Posterior cingulate gyrus (tissue), 11 donors: ENCODE measurements at regions of chr2 and their contacts with region 1.

Region 1: GRCh38 chr2:128754246-128754724 is 435.6 kb upstream of the HS6ST1 start:
- DNase-seq: peak in 8 of 10 donors; percentile 50 to 92 (median 65)

Region 2: DNA sequence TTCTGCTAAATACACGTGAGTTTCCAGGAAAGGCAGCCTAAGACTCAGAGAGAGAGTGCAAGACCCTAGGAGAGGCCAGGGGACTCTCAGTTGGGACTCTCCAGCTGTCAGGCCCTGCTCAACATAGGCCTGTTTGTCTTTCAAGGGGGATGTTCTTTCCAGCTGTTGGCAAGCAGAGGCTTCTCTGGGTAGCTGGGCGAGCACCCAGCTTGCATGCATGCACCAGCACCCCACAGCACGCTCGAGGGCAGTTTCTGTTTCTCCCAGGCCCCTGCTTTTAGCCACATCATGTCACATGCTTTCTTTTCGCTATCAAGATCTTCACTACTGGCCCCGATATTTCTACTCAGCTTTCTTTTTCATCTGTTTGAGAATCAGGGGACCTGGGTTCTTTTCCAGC is 43.7 kb after region 1 on chr2:
- intact Hi-C with region 1: loop called (anchors 2 kb)
- DNase-seq: no peak

Region 3: GRCh38 chr2:129011466-129012061 is 257.3 kb after region 1 on chr2:
- intact Hi-C with region 1: no loop called
- DNase-seq: no peak